CD8-positive, alpha-beta T cell (primary cell): ENCODE measurements at regions of chr3 and their contacts with region 1.

Region 1: DNA sequence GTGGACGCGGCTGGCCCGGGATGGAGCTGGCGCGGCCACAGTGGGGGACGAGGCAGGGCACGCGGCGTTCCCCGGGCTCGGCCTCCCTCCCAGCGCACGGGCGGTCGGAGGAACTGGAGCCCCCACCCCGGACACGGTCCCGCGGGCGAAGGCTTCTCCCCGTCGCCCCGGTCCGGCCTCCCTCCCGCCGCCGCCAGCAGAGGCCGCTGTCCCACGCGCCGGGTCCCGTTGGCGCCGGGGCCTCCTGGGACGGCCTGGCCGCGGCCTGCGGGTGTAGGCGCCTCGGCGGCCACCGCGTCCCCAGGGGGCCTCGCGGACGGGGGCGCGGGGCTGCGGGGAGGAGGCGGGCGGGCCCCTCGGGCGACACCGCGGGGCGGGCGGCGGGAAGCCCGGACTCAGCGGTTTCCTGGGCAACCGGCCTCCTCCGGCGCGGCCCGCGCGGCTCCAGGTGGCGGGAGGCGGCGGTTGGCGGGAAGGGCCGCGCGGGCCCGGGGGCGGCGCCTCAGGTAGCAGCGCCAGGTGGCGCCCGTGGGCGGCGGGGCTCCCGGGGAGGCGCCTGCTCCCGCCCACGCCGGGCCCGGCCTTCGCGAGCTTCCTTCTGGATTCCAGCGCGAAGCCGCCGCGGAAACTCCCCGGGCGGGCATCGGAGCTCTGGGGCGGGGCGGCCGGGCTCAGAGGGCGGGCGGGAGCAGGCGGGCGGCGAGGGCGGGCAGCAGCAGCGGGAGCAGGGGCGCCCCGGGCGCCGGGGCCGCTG is 26.7 kb downstream of the MELTF start:
- DNase-seq: peak; percentile 49 to 92 (median 77)
- ATAC-seq: peak; percentile 82
- H3K4me3 ChIP-seq: peak overlapping the region; percentile 41 to 58
- H3K4me3 Mint-ChIP-seq: no peak overlapping the region
- H3K27ac ChIP-seq: no peak overlapping the region
- H3K27ac Mint-ChIP-seq: no peak overlapping the region
- H3K4me1 ChIP-seq: peaks cover 8% of the 10 kb centered on the region
- H3K4me1 Mint-ChIP-seq: peaks cover 12% of the 10 kb centered on the region
- H3K27me3 ChIP-seq: no peaks in the 10 kb centered on the region
- H3K27me3 Mint-ChIP-seq: no peaks in the 10 kb centered on the region
- CTCF ChIP-seq: peak; percentile 47

Region 2: GRCh38 chr3:197093871-197094270 is 91.0 kb after region 1 on chr3:
- CTCF ChIA-PET with region 1: no interaction called
- POLR2A ChIA-PET with region 1: no interaction called
- intact Hi-C with region 1: no loop called
- DNase-seq: no peak
- ATAC-seq: no peak
- H3K4me3 ChIP-seq: no peak overlapping the region
- H3K4me3 Mint-ChIP-seq: no peak overlapping the region
- H3K27ac ChIP-seq: no peak overlapping the region
- H3K27ac Mint-ChIP-seq: no peak overlapping the region
- H3K4me1 ChIP-seq: no peaks in the 10 kb centered on the region
- H3K4me1 Mint-ChIP-seq: no peaks in the 10 kb centered on the region
- H3K27me3 ChIP-seq: no peaks in the 10 kb centered on the region
- H3K27me3 Mint-ChIP-seq: no peaks in the 10 kb centered on the region
- CTCF ChIP-seq: no peak

Region 3: GRCh38 chr3:197516517-197516889 is 513.6 kb after region 1 on chr3:
- CTCF ChIA-PET with region 1: no interaction called
- POLR2A ChIA-PET with region 1: no interaction called
- intact Hi-C with region 1: loop called (anchors 10 kb)
- DNase-seq: peak in 1 of 9 experiments; percentile 39
- ATAC-seq: peak; percentile 45
- H3K4me3 ChIP-seq: no peak overlapping the region
- H3K4me3 Mint-ChIP-seq: no peak overlapping the region
- H3K27ac ChIP-seq: peak overlapping the region; percentile 53 to 75
- H3K27ac Mint-ChIP-seq: peak overlapping the region; percentile 42
- H3K4me1 ChIP-seq: peaks cover 9% of the 10 kb centered on the region
- H3K4me1 Mint-ChIP-seq: peaks cover 9% of the 10 kb centered on the region
- H3K27me3 ChIP-seq: no peaks in the 10 kb centered on the region
- H3K27me3 Mint-ChIP-seq: no peaks in the 10 kb centered on the region
- CTCF ChIP-seq: no peak